ENCODE measurements at regions of chr5 and their contacts with region 1.

Region 1: GRCh38 chr5:151825445-151825844 is 53.7 kb downstream of the G3BP1 start:
- DNase-seq: peak in 1 of 2 donors; percentile 15
- ATAC-seq: peak; percentile 19 to 63
- H3K4me3 ChIP-seq: no peak overlapping the region
- H3K27ac ChIP-seq: no peak overlapping the region
- H3K4me1 ChIP-seq: no peaks in the 10 kb centered on the region
- H3K27me3 ChIP-seq: no peaks in the 10 kb centered on the region
- CTCF ChIP-seq: peak; percentile 55 to 76 (median 69)
- POLR2A ChIP-seq: no peak

Region 2: GRCh38 chr5:152136918-152137462 is 311.5 kb after region 1 on chr5:
- in situ Hi-C with region 1: loop called in 3 of 4 experiments (anchors 10 kb)
- intact Hi-C with region 1: loop called (anchors 5 kb)
- DNase-seq: no peak
- ATAC-seq: no peak
- H3K4me3 ChIP-seq: no peak overlapping the region
- H3K27ac ChIP-seq: no peak overlapping the region
- H3K4me1 ChIP-seq: peaks cover 0 to 4% of the 10 kb centered on the region in 2 donors
- H3K27me3 ChIP-seq: no peaks in the 10 kb centered on the region
- CTCF ChIP-seq: no peak
- POLR2A ChIP-seq: no peak

Region 3: GRCh38 chr5:152142840-152143469 is 317.5 kb after region 1 on chr5:
- in situ Hi-C with region 1: loop called in 3 of 4 experiments (anchors 10 kb)
- intact Hi-C with region 1: loop called (anchors 5 kb)
- DNase-seq: peak; percentile 10 to 15
- ATAC-seq: peak in 1 of 2 donors; percentile 41
- H3K4me3 ChIP-seq: no peak overlapping the region
- H3K27ac ChIP-seq: no peak overlapping the region
- H3K4me1 ChIP-seq: peaks cover 0 to 4% of the 10 kb centered on the region in 2 donors
- H3K27me3 ChIP-seq: no peaks in the 10 kb centered on the region
- CTCF ChIP-seq: peak in 4 of 5 experiments; percentile 51 to 70 (median 67)
- POLR2A ChIP-seq: no peak

Region 4: GRCh38 chr5:152271420-152271819 is 446.0 kb after region 1 on chr5:
- in situ Hi-C with region 1: no loop called
- intact Hi-C with region 1: loop called (anchors 10 kb)
- DNase-seq: no peak
- ATAC-seq: no peak
- H3K4me3 ChIP-seq: no peak overlapping the region
- H3K27ac ChIP-seq: no peak overlapping the region
- H3K4me1 ChIP-seq: peaks cover 0 to 10% of the 10 kb centered on the region in 2 donors
- H3K27me3 ChIP-seq: no peaks in the 10 kb centered on the region
- CTCF ChIP-seq: peak in 2 of 5 experiments; percentile 19 to 24
- POLR2A ChIP-seq: no peak

Region 5: DNA sequence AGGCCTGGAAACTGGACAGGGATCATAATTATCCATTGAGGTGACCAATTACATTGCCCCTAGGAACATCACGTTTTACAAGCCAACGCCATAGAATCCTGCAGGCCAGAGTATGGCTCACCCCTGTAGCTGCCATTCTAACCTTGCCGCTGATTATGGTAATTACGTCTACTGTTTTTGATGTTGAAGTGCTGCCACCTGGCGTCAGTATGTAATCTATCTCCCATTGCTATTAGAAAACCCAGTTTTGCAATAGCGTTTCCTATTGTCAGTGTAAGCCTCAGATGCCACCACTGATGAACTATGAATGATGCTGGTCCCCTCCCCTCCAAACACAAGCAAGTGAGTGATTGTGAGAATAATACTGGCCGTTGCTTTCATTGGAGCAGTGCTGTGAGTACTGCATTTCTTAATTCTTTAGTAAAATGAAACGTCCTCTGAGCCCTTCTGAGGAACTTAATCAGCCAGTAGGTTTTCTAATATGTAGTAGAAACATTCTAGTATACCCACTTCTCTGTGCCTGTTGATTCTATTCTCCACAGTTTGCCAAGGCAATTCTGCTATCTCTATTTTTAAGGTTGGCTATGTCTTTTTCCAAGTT is 680.1 kb after region 1 on chr5:
- in situ Hi-C with region 1: loop called in 1 of 4 experiments (anchors 5 kb)
- intact Hi-C with region 1: loop called (anchors 2 kb)
- DNase-seq: peak; percentile 4 to 25
- ATAC-seq: peak; percentile 50 to 58
- H3K4me3 ChIP-seq: no peak overlapping the region
- H3K27ac ChIP-seq: no peak overlapping the region
- H3K4me1 ChIP-seq: no peaks in the 10 kb centered on the region
- H3K27me3 ChIP-seq: no peaks in the 10 kb centered on the region
- CTCF ChIP-seq: peak in 2 of 5 experiments; percentile 39 to 48
- POLR2A ChIP-seq: no peak

Measured in gastrocnemius medialis (tissue), 4 donors.